IMR-90 (cell line): ENCODE measurements at regions of chr1 and their contacts with region 1.

Region 1: GRCh38 chr1:155044812-155045690 is 6.1 kb upstream of the ADAM15 start:
- DNase-seq: peak; percentile 75
- ATAC-seq: peak; percentile 98
- H3K4me3 ChIP-seq: no peak overlapping the region
- H3K27ac ChIP-seq: no peak overlapping the region
- H3K4me1 ChIP-seq: peaks cover 9% of the 10 kb centered on the region
- H3K27me3 ChIP-seq: peaks cover 12% of the 10 kb centered on the region; the same call in 1 of the 2 replicates
- CTCF ChIP-seq: peak; percentile 82
- POLR2A ChIP-seq: no peak
- RAD21 ChIP-seq: peak; percentile 74

Region 2: GRCh38 chr1:155063550-155064110 is 18.6 kb after region 1 on chr1 and contains the start of gene EFNA4:
- CTCF ChIA-PET with region 1: interaction called, 12 read pairs
- POLR2A ChIA-PET with region 1: no interaction called
- dilution Hi-C with region 1: no loop called
- in situ Hi-C with region 1: no loop called
- intact Hi-C with region 1: no loop called
- DNase-seq: peak; percentile 80
- ATAC-seq: peak; percentile 91
- H3K4me3 ChIP-seq: peak within 1 kb of the TSS; percentile 90
- H3K27ac ChIP-seq: peak within 1 kb of the TSS; percentile 44
- H3K4me1 ChIP-seq: peaks cover 4% of the 10 kb centered on the region; the same call in 1 of the 2 replicates
- H3K27me3 ChIP-seq: no peaks in the 10 kb centered on the region
- CTCF ChIP-seq: no peak
- POLR2A ChIP-seq: peak; percentile 53; the same call in 1 of the 2 replicates
- RAD21 ChIP-seq: no peak
- total RNA-seq, gene EFNA4: 3.3 and 3.8 TPM in 2 replicates

Region 3: DNA sequence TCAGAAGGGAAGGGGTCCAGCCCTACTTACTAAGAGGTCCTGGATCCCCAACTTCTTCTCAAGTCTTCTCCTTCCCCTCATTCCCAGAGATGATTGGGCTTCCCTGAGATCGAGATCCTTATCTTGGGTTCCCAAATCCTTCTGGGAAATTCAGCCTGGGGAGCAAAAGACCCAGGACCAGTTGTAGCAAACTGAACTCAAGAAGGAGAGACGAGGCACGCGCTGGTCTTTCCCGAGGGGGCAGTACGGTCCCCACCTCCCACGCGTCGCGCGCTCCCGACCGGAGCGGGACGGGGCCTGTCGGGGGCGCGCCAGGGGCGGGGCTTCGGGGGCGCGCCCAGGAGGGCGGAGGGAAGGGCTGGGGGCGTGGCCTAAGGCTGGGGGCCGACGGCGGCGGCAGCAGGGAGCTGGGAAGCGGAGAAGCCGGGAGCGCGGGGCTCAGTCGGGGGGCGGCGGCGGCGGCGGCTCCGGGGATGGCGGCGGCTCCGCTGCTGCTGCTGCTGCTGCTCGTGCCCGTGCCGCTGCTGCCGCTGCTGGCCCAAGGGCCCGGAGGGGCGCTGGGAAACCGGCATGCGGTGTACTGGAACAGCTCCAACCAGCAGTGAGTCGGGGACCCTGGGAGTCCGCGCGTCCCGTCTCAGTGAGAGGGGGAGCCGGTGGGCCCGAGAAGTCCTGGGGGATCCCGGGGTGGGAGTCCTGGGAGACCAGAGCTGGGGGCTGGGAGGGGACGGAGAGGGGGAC is 33.6 kb after region 1 on chr1 and contains the start of gene EFNA3:
- CTCF ChIA-PET with region 1: no interaction called
- POLR2A ChIA-PET with region 1: no interaction called
- dilution Hi-C with region 1: no loop called
- in situ Hi-C with region 1: no loop called
- intact Hi-C with region 1: no loop called
- DNase-seq: peak; percentile 42
- ATAC-seq: peak; percentile 89
- H3K4me3 ChIP-seq: peak within 1 kb of the TSS; percentile 36
- H3K27ac ChIP-seq: no peak within 1 kb of the TSS
- H3K4me1 ChIP-seq: peaks cover 6% of the 10 kb centered on the region; the same call in 1 of the 2 replicates
- H3K27me3 ChIP-seq: peaks cover 74% of the 10 kb centered on the region
- CTCF ChIP-seq: no peak
- POLR2A ChIP-seq: no peak
- RAD21 ChIP-seq: no peak
- total RNA-seq, gene EFNA3: 0.56 and 0.72 TPM in 2 replicates

Region 4: DNA sequence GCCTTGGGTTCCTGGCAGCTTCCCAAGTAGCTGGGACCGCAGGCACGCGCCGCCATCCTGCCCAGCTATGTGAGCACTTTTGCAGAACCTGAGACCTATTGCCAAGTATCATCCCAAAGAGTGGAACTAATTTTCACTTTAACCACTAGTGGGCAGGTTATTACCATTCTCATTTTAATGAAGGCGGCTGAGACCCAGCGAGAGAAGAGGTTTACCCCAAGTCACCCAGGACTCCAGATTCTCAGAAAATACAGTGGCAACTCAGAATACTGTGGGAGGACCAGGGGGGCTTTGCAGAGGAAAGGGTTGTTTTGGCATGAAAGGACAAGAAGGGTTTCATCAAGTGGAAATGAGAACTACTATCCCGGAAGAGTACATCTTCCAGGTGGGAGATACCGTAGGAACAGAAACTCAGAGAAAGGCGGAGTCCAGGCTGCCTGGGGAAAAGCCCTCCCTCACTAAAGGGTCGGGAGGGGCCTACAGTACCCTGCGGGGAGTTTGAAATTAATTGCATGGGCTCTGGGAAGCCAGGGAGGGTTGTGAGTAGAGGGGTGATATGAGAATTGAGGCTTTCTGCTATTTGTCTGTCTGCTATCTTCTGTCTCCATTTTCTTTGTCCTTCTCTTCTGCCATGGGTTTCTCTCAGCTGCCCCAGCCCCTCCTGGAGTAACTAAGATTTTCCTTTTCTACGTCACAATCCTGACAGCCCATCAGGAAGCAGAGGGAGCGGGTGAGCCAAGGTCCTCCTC is 1101.1 kb after region 1 on chr1:
- CTCF ChIA-PET with region 1: no interaction called
- POLR2A ChIA-PET with region 1: interaction called, 10 read pairs
- dilution Hi-C with region 1: no loop called
- in situ Hi-C with region 1: no loop called
- intact Hi-C with region 1: no loop called
- DNase-seq: peak; percentile 94
- ATAC-seq: peak; percentile 74
- H3K4me3 ChIP-seq: no peak overlapping the region
- H3K27ac ChIP-seq: no peak overlapping the region
- H3K4me1 ChIP-seq: peaks cover 11% of the 10 kb centered on the region; the same call in 1 of the 2 replicates
- H3K27me3 ChIP-seq: peaks cover 14% of the 10 kb centered on the region; the same call in 1 of the 2 replicates
- CTCF ChIP-seq: peak; percentile 78
- POLR2A ChIP-seq: peak; percentile 57; the same call in 1 of the 2 replicates
- RAD21 ChIP-seq: peak; percentile 80